ENCODE measurements at regions of chr19 and their contacts with region 1.

Region 1: DNA sequence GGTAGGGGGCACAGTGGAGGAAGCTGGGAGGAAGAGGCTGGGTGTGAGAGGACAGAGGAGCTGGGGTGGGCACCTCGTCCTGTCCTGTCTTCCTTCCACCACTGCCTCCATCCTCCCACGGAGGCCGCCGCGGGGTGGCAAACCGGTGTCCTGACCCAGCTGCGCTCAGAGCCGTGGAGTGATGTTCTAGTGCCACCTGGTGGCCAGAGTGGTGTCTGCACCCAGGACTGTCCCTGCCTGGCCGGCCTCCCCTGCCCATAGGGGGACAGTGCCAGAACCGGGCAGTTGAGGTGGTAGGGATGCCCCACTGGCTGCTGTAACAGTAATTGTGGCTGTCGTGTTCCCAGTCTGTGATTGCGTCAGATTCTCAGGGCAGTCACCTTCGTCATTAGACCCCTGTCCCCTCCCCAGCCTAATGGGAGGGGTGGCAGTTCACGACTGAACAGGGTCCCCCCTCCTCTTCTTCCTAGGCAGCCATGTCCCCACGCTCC is 11.1 kb upstream of the ARRDC2 start:
- DNase-seq: peak; percentile 83 to 88
- H3K4me3 ChIP-seq: no peak overlapping the region
- H3K27ac ChIP-seq: no peak overlapping the region
- H3K4me1 ChIP-seq: no peaks in the 10 kb centered on the region
- H3K27me3 ChIP-seq: no peaks in the 10 kb centered on the region
- CTCF ChIP-seq: peak; percentile 94 to 99 (median 98)
- POLR2A ChIP-seq: no peak

Region 2: GRCh38 chr19:17859533-17860330 is 137.1 kb before region 1 on chr19 and contains the start of gene RPL18A:
- intact Hi-C with region 1: loop called (anchors 10 kb)
- DNase-seq: peak; percentile 99
- H3K4me3 ChIP-seq: peak within 1 kb of the TSS; percentile 78 to 92
- H3K27ac ChIP-seq: peak within 1 kb of the TSS; percentile 87 to 88
- H3K4me1 ChIP-seq: peaks cover 0 to 4% of the 10 kb centered on the region in 2 donors
- H3K27me3 ChIP-seq: no peaks in the 10 kb centered on the region
- CTCF ChIP-seq: peak; percentile 85 to 93 (median 88)
- POLR2A ChIP-seq: peak; percentile 94 to 98
- total RNA-seq, gene RPL18A: 649 to 2,637 (median 1,942) TPM

Region 3: GRCh38 chr19:17947815-17948513 is 48.9 kb before region 1 on chr19:
- intact Hi-C with region 1: loop called (anchors 5 kb)
- DNase-seq: peak; percentile 89 to 93
- H3K4me3 ChIP-seq: peak overlapping the region; percentile 50 to 83
- H3K27ac ChIP-seq: peak overlapping the region; percentile 78 to 80
- H3K4me1 ChIP-seq: peaks cover 0 to 36% of the 10 kb centered on the region in 2 donors
- H3K27me3 ChIP-seq: peaks cover 16 to 25% of the 10 kb centered on the region in 2 donors
- CTCF ChIP-seq: peak in 1 of 4 experiments; percentile 13
- POLR2A ChIP-seq: no peak